Activated CD4-positive, alpha-beta T cell treated with anti-CD3 and anti-CD28 coated beads, Interleukin-2, amount 10 ng/mL, durations not matched to agents 7 days and 5 days (primary cell): ENCODE measurements at regions of chr20 and their contacts with region 1.

Region 1: GRCh38 chr20:50980851-50981713 is 22.5 kb downstream of the MOCS3 start:
- DNase-seq: peak; percentile 79
- H3K4me3 Mint-ChIP-seq: no peak overlapping the region
- H3K27ac Mint-ChIP-seq: no peak overlapping the region
- H3K4me1 Mint-ChIP-seq: peaks cover 4% of the 10 kb centered on the region
- H3K27me3 Mint-ChIP-seq: peaks cover 33% of the 10 kb centered on the region

Region 2: GRCh38 chr20:50958615-50959542 is 22.2 kb before region 1 on chr20 and contains the start of gene MOCS3:
- CTCF ChIA-PET with region 1: interaction called, 10 read pairs
- POLR2A ChIA-PET with region 1: no interaction called
- DNase-seq: peak; percentile 91
- H3K4me3 Mint-ChIP-seq: peak within 1 kb of the TSS; percentile 87
- H3K27ac Mint-ChIP-seq: peak within 1 kb of the TSS; percentile 96
- H3K4me1 Mint-ChIP-seq: peaks cover 48% of the 10 kb centered on the region
- H3K27me3 Mint-ChIP-seq: no peaks in the 10 kb centered on the region
- total RNA-seq, gene MOCS3: 4.2 to 5.1 TPM

Region 3: DNA sequence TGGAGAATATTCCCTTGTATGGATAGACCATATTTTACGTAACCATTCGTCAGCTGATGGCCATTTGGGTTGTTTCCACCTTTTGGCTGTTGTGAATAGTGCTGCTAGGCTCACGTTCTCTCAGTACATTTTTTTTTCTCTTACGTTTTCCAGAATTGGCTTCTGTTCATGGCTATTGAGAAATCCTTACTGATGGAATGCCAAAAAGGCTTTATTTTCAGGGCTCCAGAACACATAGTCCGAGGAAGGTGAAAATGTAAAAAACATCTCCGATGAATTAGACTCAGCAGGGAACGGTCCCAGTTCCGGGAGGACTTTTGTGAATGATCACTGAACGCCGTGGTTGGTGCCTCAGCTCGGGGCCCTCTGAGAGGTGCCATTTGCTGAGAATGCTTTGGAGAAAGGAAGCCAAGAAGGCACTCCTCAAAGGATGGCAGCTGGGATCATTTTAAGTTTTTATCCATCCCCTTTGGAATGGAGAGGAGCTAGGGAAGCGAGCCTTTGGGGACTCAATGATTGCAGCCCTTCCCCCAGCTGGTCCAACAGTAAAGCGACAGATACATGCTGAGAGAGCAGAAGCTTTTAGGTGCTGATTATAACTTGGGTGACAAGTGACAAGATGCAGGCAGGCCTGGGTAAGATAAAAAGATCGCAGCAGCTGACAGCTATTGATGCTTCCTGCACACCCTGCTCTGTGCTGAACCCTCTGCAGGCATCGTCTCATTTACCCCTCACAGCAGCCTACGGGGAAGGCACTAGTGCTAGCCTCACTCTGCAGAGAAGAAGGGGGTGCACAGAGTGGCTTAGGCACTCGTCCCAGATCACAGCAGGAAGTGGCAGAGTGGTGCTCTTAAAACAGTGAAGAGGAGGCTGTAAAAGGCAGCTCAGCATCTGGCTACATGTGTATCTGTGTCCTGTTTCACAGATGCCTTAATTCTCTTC is 175.2 kb after region 1 on chr20:
- CTCF ChIA-PET with region 1: no interaction called
- POLR2A ChIA-PET with region 1: no interaction called
- DNase-seq: no peak
- H3K4me3 Mint-ChIP-seq: no peak overlapping the region
- H3K27ac Mint-ChIP-seq: no peak overlapping the region
- H3K4me1 Mint-ChIP-seq: no peaks in the 10 kb centered on the region
- H3K27me3 Mint-ChIP-seq: peaks cover 26% of the 10 kb centered on the region